ENCODE measurements at regions of chr20 and their contacts with region 1.

Region 1: GRCh38 chr20:50498081-50498776 is 12.0 kb upstream of the PTPN1 start:
- DNase-seq: no peak
- ATAC-seq: peak; percentile 81
- H3K4me3 Mint-ChIP-seq: peak overlapping the region; percentile 71
- H3K27ac Mint-ChIP-seq: peak overlapping the region; percentile 99
- H3K4me1 Mint-ChIP-seq: peaks cover 49% of the 10 kb centered on the region
- H3K27me3 Mint-ChIP-seq: no peaks in the 10 kb centered on the region
- CTCF ChIP-seq: no peak

Region 2: GRCh38 chr20:50438986-50439407 is 59.2 kb before region 1 on chr20:
- CTCF ChIA-PET with region 1: no interaction called
- POLR2A ChIA-PET with region 1: no interaction called
- intact Hi-C with region 1: no loop called
- DNase-seq: no peak
- ATAC-seq: no peak
- H3K4me3 Mint-ChIP-seq: no peak overlapping the region
- H3K27ac Mint-ChIP-seq: no peak overlapping the region
- H3K4me1 Mint-ChIP-seq: no peaks in the 10 kb centered on the region
- H3K27me3 Mint-ChIP-seq: peaks cover 6% of the 10 kb centered on the region
- CTCF ChIP-seq: no peak

Region 3: GRCh38 chr20:50478162-50479036 is 19.8 kb before region 1 on chr20:
- CTCF ChIA-PET with region 1: interaction called, 3 read pairs
- POLR2A ChIA-PET with region 1: interaction called, 15 read pairs
- intact Hi-C with region 1: loop called (anchors 1 kb)
- DNase-seq: peak; percentile 53
- ATAC-seq: peak; percentile 99
- H3K4me3 Mint-ChIP-seq: peak overlapping the region; percentile 1
- H3K27ac Mint-ChIP-seq: no peak overlapping the region
- H3K4me1 Mint-ChIP-seq: peaks cover 43% of the 10 kb centered on the region
- H3K27me3 Mint-ChIP-seq: no peaks in the 10 kb centered on the region
- CTCF ChIP-seq: peak; percentile 24

Measured in activated B cell treated with CpG ODN at 0.5 μM for 24 hours (primary cell).